ENCODE measurements at regions of chrX and their contacts with region 1.

Region 1: GRCh38 chrX:40647307-40648197 is at the start of gene CXorf38:
- DNase-seq: peak; percentile 96
- H3K4me3 ChIP-seq: peak within 1 kb of the TSS; percentile 26 to 94 (median 91)
- H3K27ac ChIP-seq: peak within 1 kb of the TSS; percentile 89 to 98 (median 96)
- H3K4me1 ChIP-seq: peaks cover 0 to 26% (median 21%) of the 10 kb centered on the region in 4 donors
- H3K27me3 ChIP-seq: no peaks in the 10 kb centered on the region
- CTCF ChIP-seq: no peak
- EP300 ChIP-seq: no peak
- POLR2A ChIP-seq: peak; percentile 66
- total RNA-seq, gene CXorf38: 5.4 to 18.6 (median 12.1) TPM

Region 2: DNA sequence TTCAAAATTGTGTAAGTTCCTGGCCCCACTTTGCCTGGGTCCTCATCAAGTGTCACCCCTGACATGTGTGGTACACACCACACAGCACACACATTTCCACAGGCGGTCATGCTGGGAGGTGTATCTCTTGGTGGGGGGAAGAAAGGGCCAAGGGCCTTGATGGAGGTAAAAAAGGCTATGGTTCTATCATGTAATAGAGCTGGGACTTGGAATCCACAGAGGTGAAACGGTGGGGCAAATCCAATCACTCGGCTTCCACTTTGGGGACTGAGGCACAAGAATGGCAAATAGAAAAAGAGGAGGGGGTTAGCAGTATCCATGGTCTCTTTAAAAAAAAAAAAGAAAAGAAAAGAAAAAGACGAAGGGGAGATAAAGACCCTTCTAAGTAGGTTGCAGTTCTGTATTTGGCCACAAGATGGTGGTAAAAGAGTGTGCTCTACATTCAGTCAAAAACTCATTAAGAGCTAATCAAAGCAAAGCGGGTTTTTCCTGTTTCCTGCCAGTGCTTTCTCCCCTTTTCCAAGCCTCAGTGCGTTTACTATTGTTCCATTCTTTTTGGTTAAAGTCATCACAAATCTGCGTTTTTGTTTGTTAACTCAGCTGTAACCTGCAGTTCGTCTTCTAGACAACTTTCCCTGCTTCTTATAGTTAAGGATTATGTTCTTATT is 103.8 kb before region 1 on chrX:
- in situ Hi-C with region 1: no loop called
- intact Hi-C with region 1: no loop called
- DNase-seq: no peak
- H3K4me3 ChIP-seq: no peak overlapping the region
- H3K27ac ChIP-seq: no peak overlapping the region
- H3K4me1 ChIP-seq: peaks cover 0 to 15% (median 5%) of the 10 kb centered on the region in 4 donors
- H3K27me3 ChIP-seq: no peaks in the 10 kb centered on the region
- CTCF ChIP-seq: peak; percentile 65 to 93 (median 70)
- EP300 ChIP-seq: no peak
- POLR2A ChIP-seq: no peak

Region 3: GRCh38 chrX:40778861-40779575 is 131.5 kb after region 1 on chrX:
- in situ Hi-C with region 1: loop called in 1 of 4 experiments (anchors 25 kb)
- intact Hi-C with region 1: no loop called
- DNase-seq: no peak
- H3K4me3 ChIP-seq: no peak overlapping the region
- H3K27ac ChIP-seq: no peak overlapping the region
- H3K4me1 ChIP-seq: no peaks in the 10 kb centered on the region
- H3K27me3 ChIP-seq: no peaks in the 10 kb centered on the region
- CTCF ChIP-seq: no peak
- EP300 ChIP-seq: no peak
- POLR2A ChIP-seq: no peak

Region 4: GRCh38 chrX:40792433-40792832 is 144.9 kb after region 1 on chrX:
- in situ Hi-C with region 1: loop called in 2 of 4 experiments (anchors 10 to 25 kb)
- intact Hi-C with region 1: no loop called
- DNase-seq: no peak
- H3K4me3 ChIP-seq: no peak overlapping the region
- H3K27ac ChIP-seq: no peak overlapping the region
- H3K4me1 ChIP-seq: peaks cover 0 to 5% (median 0%) of the 10 kb centered on the region in 4 donors
- H3K27me3 ChIP-seq: no peaks in the 10 kb centered on the region
- CTCF ChIP-seq: no peak
- EP300 ChIP-seq: no peak
- POLR2A ChIP-seq: no peak

Region 5: DNA sequence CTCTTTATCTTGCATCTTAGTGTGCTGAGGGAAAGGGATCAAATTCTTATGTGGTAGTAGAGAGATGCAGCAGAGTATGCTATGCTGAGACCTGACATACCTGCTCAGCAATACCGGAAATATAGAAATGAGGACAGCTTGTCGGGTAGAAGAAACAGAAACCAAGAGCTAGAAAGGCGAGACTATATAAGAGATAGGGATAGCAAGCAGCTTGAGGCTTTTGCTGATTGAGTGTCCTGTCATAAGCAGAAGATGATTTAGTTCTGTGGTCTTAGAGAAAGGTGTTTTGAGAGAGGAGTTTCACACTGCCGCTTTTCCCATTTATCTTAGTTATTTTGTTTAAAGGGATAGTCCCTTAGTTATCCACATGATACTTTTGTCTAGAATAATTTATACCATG is 469.4 kb after region 1 on chrX:
- in situ Hi-C with region 1: loop called in 2 of 4 experiments (anchors 25 kb)
- intact Hi-C with region 1: loop called (anchors 10 kb)
- DNase-seq: no peak
- H3K4me3 ChIP-seq: no peak overlapping the region
- H3K27ac ChIP-seq: peak overlapping the region in 1 of 4 donors; percentile 19
- H3K4me1 ChIP-seq: peaks cover 0 to 29% (median 4%) of the 10 kb centered on the region in 4 donors
- H3K27me3 ChIP-seq: no peaks in the 10 kb centered on the region
- CTCF ChIP-seq: no peak
- EP300 ChIP-seq: no peak
- POLR2A ChIP-seq: no peak

Region 6: GRCh38 chrX:41127477-41128192 is 480.1 kb after region 1 on chrX:
- in situ Hi-C with region 1: loop called in 3 of 4 experiments (anchors 25 kb)
- intact Hi-C with region 1: loop called (anchors 10 kb)
- DNase-seq: no peak
- H3K4me3 ChIP-seq: no peak overlapping the region
- H3K27ac ChIP-seq: peak overlapping the region in 1 of 4 donors; percentile 2
- H3K4me1 ChIP-seq: peaks cover 0 to 20% (median 6%) of the 10 kb centered on the region in 4 donors
- H3K27me3 ChIP-seq: no peaks in the 10 kb centered on the region
- CTCF ChIP-seq: no peak
- EP300 ChIP-seq: no peak
- POLR2A ChIP-seq: no peak

Region 7: DNA sequence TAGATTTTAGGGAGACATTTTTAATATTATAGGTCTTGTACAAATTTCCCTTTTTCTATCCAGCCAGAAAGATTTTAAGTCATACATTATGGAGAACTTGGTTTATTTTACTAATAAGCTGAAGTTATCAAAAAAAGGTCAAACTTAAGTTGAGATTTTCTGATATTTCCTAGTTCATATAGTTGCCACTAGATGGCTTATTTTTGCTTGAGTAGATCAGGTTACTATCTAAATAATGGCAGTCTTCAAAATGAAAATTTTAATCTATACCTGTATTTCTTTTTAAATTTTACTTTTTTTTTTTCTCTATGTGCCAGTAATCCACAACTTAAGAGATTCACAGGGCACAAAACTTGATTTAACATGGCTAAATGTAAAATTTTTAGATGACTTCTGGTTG is 490.0 kb after region 1 on chrX:
- in situ Hi-C with region 1: loop called in 1 of 4 experiments (anchors 25 kb)
- intact Hi-C with region 1: no loop called
- DNase-seq: no peak
- H3K4me3 ChIP-seq: no peak overlapping the region
- H3K27ac ChIP-seq: no peak overlapping the region
- H3K4me1 ChIP-seq: no peaks in the 10 kb centered on the region
- H3K27me3 ChIP-seq: no peaks in the 10 kb centered on the region
- CTCF ChIP-seq: peak in 3 of 5 experiments; percentile 23 to 32 (median 27)
- EP300 ChIP-seq: no peak
- POLR2A ChIP-seq: no peak